Gastrocnemius medialis (tissue), 4 donors: ENCODE measurements at regions of chr12 and their contacts with region 1.

Region 1: DNA sequence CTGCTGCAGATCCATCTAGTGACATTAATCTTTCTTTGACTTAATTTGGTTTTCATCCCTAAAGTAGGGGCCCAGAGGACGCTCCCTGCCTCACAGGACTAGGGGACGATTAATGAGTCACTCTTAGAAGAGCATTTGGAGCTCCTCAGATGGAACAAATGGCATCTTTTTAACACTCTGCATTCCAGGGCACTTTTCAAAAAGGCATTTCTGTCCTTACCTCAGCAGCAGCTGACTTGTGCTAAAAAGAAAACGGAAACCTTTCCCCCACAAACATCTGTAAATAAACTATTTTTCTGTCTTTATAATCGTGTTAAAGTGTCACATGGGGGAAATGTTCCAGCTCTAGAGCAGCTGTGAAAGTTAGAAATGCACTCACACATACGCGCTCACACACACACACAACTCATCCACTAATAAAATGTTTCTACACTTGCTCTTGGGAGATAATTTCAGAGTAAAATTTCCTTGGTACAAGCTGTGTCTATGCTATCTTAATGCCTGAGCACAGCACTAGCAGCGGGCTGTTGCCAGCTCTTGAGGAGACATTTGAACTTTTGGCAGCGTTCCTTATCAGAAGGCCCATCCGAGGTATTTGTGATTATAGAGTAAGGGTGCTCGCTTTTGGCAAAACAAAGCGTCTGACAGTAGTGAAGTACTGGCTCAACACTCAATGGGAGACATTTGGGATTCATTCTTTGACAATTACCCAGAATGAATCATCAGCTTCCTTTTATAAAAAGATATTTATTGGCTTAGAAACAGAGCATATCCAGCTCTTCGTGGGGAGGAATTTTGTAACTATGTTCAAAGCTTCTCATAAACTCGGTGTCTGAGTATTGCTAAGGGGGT is 141.3 kb downstream of the PLXNC1 start:
- DNase-seq: no peak
- ATAC-seq: peak; percentile 65 to 68
- H3K4me3 ChIP-seq: no peak overlapping the region
- H3K27ac ChIP-seq: peak overlapping the region; percentile 11 to 62 (median 54)
- H3K4me1 ChIP-seq: peaks cover 9 to 13% of the 10 kb centered on the region in 2 donors
- H3K27me3 ChIP-seq: no peaks in the 10 kb centered on the region
- CTCF ChIP-seq: no peak
- POLR2A ChIP-seq: no peak

Region 2: DNA sequence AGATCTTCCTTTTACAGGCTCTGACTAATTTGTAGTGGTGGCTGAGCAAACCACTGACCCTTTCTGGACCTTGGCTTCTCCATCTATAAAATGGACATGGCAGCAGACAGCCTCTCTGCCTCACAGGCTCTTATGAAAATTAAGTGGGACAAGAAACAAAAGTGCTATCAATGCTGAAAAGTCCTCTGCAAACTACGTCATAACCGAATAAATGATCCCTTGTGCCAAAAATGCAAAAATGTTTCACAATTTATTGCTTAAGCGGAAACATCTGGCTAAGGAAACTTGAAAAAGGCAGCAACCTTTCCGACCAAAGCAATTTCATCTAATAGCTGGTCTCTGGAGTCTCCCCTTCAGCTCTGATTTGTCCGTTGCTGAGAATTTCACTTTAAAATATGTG is 249.8 kb before region 1 on chr12:
- in situ Hi-C with region 1: no loop called
- intact Hi-C with region 1: no loop called
- DNase-seq: no peak
- ATAC-seq: peak in 1 of 2 donors; percentile 36
- H3K4me3 ChIP-seq: no peak overlapping the region
- H3K27ac ChIP-seq: no peak overlapping the region
- H3K4me1 ChIP-seq: no peaks in the 10 kb centered on the region
- H3K27me3 ChIP-seq: no peaks in the 10 kb centered on the region
- CTCF ChIP-seq: no peak
- POLR2A ChIP-seq: no peak

Region 3: DNA sequence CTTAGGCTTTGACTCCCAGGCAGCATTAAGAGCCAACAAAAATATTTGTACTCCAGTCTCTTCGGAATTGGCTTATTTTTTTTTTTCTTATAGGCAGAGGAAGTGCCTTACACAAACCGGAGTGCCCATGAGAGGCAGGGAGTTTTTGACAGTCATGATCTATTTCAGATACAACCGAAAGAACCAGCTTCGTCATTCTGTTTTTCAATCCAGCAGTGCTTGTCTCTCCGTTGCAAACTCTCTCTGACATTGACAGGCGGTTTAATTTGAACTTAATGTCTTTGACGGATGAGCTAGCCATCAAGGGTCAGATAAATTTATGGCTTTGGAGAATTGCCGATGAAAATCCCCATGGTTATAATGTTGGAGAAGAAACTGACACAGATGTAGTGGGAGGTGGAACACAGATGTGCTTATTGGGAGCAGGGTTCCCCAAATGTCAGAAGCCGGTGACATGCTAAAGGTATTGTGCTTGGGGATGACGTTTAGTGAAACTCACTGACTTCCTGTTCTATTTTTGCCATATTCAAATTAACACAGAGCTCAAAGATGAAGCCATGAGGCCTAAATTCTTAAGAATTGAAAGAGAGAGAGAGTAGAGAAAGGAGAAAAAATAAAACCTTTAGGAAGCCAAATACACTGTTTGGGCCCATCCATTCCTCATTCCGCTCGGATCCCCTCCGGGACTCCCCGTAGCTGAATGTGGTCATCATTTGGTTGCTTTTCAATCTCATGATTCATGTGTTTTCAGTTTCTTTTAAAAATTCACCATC is 81.7 kb before region 1 on chr12:
- in situ Hi-C with region 1: no loop called
- intact Hi-C with region 1: loop called (anchors 10 kb)
- DNase-seq: no peak
- ATAC-seq: peak; percentile 50 to 69
- H3K4me3 ChIP-seq: peak overlapping the region in 3 of 4 donors; percentile 7 to 19 (median 12)
- H3K27ac ChIP-seq: peak overlapping the region; percentile 46 to 54 (median 50)
- H3K4me1 ChIP-seq: no peaks in the 10 kb centered on the region
- H3K27me3 ChIP-seq: no peaks in the 10 kb centered on the region
- CTCF ChIP-seq: no peak
- POLR2A ChIP-seq: no peak

Region 4: GRCh38 chr12:94230357-94230905 is 59.3 kb before region 1 on chr12:
- in situ Hi-C with region 1: no loop called
- intact Hi-C with region 1: no loop called
- DNase-seq: no peak
- ATAC-seq: no peak
- H3K4me3 ChIP-seq: no peak overlapping the region
- H3K27ac ChIP-seq: no peak overlapping the region
- H3K4me1 ChIP-seq: no peaks in the 10 kb centered on the region
- H3K27me3 ChIP-seq: no peaks in the 10 kb centered on the region
- CTCF ChIP-seq: no peak
- POLR2A ChIP-seq: no peak